Common myeloid progenitor, CD34-positive (primary cell): ENCODE measurements at regions of chr11 and their contacts with region 1.

Region 1: GRCh38 chr11:66069715-66070603 is at the start of gene PACS1:
- DNase-seq: peak; percentile 82 to 92 (median 90)
- H3K4me3 ChIP-seq: peak within 1 kb of the TSS; percentile 74 to 92 (median 88)
- H3K27ac ChIP-seq: peak within 1 kb of the TSS; percentile 38 to 83
- H3K4me1 ChIP-seq: peaks cover 22 to 60% (median 41%) of the 10 kb centered on the region in 4 experiments
- H3K27me3 ChIP-seq: no peaks in the 10 kb centered on the region

Region 2: GRCh38 chr11:66045177-66045639 is 24.8 kb before region 1 on chr11:
- CTCF ChIA-PET with region 1: interaction called, 99 read pairs
- POLR2A ChIA-PET with region 1: no interaction called
- DNase-seq: peak; percentile 84 to 91 (median 89)
- H3K4me3 ChIP-seq: peak overlapping the region in 4 of 7 experiments; percentile 9 to 39 (median 24)
- H3K27ac ChIP-seq: no peak overlapping the region
- H3K4me1 ChIP-seq: peaks cover 0 to 17% (median 9%) of the 10 kb centered on the region in 4 experiments
- H3K27me3 ChIP-seq: peaks cover 0 to 5% (median 0%) of the 10 kb centered on the region in 5 experiments

Region 3: GRCh38 chr11:66051766-66052663 is 17.9 kb before region 1 on chr11 and contains the start of gene SF3B2:
- CTCF ChIA-PET with region 1: interaction called, 99 read pairs
- POLR2A ChIA-PET with region 1: interaction called, 6 read pairs
- DNase-seq: peak; percentile 98 to 99 (median 99)
- H3K4me3 ChIP-seq: peak within 1 kb of the TSS; percentile 78 to 100 (median 98)
- H3K27ac ChIP-seq: peak within 1 kb of the TSS; percentile 86 to 95
- H3K4me1 ChIP-seq: peaks cover 1 to 30% (median 23%) of the 10 kb centered on the region in 4 experiments
- H3K27me3 ChIP-seq: peaks cover 0 to 3% (median 0%) of the 10 kb centered on the region in 5 experiments

Region 4: GRCh38 chr11:66081505-66081904 is 11.5 kb after region 1 on chr11:
- CTCF ChIA-PET with region 1: interaction called, 71 read pairs
- POLR2A ChIA-PET with region 1: interaction called, 17 read pairs
- DNase-seq: peak; percentile 84 to 97 (median 94)
- H3K4me3 ChIP-seq: peak overlapping the region in 6 of 7 experiments; percentile 37 to 67 (median 50)
- H3K27ac ChIP-seq: peak overlapping the region; percentile 61 to 81
- H3K4me1 ChIP-seq: peaks cover 38 to 70% (median 47%) of the 10 kb centered on the region in 4 experiments
- H3K27me3 ChIP-seq: no peaks in the 10 kb centered on the region

Region 5: DNA sequence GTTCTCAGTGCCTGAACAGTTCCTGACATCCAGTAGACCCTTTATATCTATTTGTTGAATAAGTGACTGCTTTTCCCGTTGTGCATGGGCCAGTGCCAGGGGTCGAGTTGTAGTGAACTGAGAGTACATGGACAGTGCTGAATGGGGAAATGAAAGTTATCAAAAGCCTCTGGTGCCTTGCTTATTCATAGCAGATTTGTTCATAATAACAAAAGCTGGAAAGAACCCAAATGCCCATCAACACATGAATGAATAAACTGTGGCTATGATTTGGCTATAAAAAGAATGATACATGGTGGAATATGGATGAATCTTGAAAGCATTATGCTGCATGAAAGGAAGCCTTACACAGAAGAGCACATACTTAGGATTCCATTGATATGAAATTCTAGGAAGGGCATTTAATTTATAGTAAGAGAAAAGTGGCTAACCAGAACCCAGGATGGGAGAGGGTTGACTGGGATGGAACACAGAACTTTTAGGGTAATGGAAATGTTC is 42.7 kb after region 1 on chr11:
- CTCF ChIA-PET with region 1: interaction called, 28 read pairs
- POLR2A ChIA-PET with region 1: no interaction called
- DNase-seq: no peak
- H3K4me3 ChIP-seq: no peak overlapping the region
- H3K27ac ChIP-seq: peak overlapping the region in 1 of 2 experiments; percentile 1
- H3K4me1 ChIP-seq: peaks cover 39 to 51% (median 39%) of the 10 kb centered on the region in 4 experiments
- H3K27me3 ChIP-seq: no peaks in the 10 kb centered on the region

Region 6: GRCh38 chr11:66136752-66137123 is 66.8 kb after region 1 on chr11:
- CTCF ChIA-PET with region 1: interaction called, 27 read pairs
- POLR2A ChIA-PET with region 1: interaction called, 4 read pairs
- DNase-seq: no peak
- H3K4me3 ChIP-seq: no peak overlapping the region
- H3K27ac ChIP-seq: no peak overlapping the region
- H3K4me1 ChIP-seq: peaks cover 3 to 28% (median 8%) of the 10 kb centered on the region in 4 experiments
- H3K27me3 ChIP-seq: no peaks in the 10 kb centered on the region

Region 7: DNA sequence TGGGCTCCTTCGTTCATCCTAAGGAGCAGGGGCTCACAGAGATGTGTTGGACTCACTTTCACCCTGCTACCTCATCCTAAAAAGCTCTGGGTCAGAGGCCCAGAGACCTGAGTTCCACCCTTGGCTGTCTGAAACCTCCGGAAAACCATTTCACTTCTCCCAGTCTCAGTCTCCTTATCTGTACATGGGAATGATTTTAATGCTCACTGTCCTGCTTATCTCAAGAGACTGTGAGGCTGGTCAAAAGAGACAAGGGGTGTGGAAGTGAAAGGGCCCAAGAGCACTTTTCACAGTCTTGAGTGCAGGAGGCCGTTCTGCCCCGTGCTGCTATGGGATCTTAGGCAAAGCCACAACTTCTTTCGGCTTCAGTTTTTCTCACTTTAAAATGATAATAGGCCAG is 337.7 kb after region 1 on chr11:
- CTCF ChIA-PET with region 1: no interaction called
- POLR2A ChIA-PET with region 1: no interaction called
- DNase-seq: no peak
- H3K4me3 ChIP-seq: no peak overlapping the region
- H3K27ac ChIP-seq: no peak overlapping the region
- H3K4me1 ChIP-seq: peaks cover 0 to 9% (median 6%) of the 10 kb centered on the region in 4 experiments
- H3K27me3 ChIP-seq: peaks cover 2 to 65% (median 25%) of the 10 kb centered on the region in 5 experiments